CD4-positive, alpha-beta memory T cell (primary cell): ENCODE measurements at regions of chr5 and their contacts with region 1.

Region 1: DNA sequence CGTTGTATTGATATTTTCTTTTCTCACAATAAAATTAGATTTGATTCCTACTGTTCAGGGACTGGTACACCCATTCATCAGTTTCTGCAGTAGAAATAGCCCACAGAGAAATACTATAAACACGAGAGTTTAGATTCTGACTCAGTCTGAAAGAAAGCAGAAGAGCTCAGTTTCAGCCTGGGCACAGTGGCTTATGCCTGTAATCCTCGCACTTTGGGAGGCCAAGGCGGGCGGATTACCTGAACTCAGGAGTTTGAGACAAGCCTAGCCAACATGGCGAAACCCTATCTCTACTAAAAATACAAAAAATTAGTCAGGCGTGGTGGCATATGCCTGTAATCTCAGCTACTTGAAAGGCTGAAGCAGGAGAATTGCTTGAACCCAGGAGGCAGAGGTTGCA is 8.6 kb downstream of the ITK start:
- DNase-seq: no peak
- H3K4me3 ChIP-seq: peak overlapping the region; percentile 44 to 59
- H3K4me3 Mint-ChIP-seq: peak overlapping the region; percentile 84 to 100 (median 96)
- H3K27ac ChIP-seq: peak overlapping the region; percentile 64
- H3K27ac Mint-ChIP-seq: peak overlapping the region; percentile 84 to 97 (median 93)
- H3K4me1 ChIP-seq: peaks cover 97% of the 10 kb centered on the region
- H3K4me1 Mint-ChIP-seq: peaks cover 66 to 91% (median 78%) of the 10 kb centered on the region in 4 donors
- H3K27me3 ChIP-seq: no peaks in the 10 kb centered on the region
- H3K27me3 Mint-ChIP-seq: no peaks in the 10 kb centered on the region

Region 2: GRCh38 chr5:156647034-156647451 is 542.2 kb before region 1 on chr5:
- CTCF ChIA-PET with region 1: no interaction called
- POLR2A ChIA-PET with region 1: no interaction called
- intact Hi-C with region 1: no loop called
- DNase-seq: no peak
- H3K4me3 ChIP-seq: no peak overlapping the region
- H3K4me3 Mint-ChIP-seq: no peak overlapping the region
- H3K27ac ChIP-seq: no peak overlapping the region
- H3K27ac Mint-ChIP-seq: no peak overlapping the region
- H3K4me1 ChIP-seq: no peaks in the 10 kb centered on the region
- H3K4me1 Mint-ChIP-seq: no peaks in the 10 kb centered on the region
- H3K27me3 ChIP-seq: no peaks in the 10 kb centered on the region
- H3K27me3 Mint-ChIP-seq: peaks cover 8% of the 10 kb centered on the region in 2 donors

Region 3: GRCh38 chr5:156934450-156935211 is 254.6 kb before region 1 on chr5:
- CTCF ChIA-PET with region 1: no interaction called
- POLR2A ChIA-PET with region 1: no interaction called
- intact Hi-C with region 1: no loop called
- DNase-seq: peak; percentile 45 to 56 (median 50)
- H3K4me3 ChIP-seq: no peak overlapping the region
- H3K4me3 Mint-ChIP-seq: peak overlapping the region in 7 of 8 donors; percentile 49 to 69 (median 58)
- H3K27ac ChIP-seq: no peak overlapping the region
- H3K27ac Mint-ChIP-seq: peak overlapping the region in 5 of 7 donors; percentile 6 to 72 (median 30)
- H3K4me1 ChIP-seq: peaks cover under 1% of the 10 kb centered on the region
- H3K4me1 Mint-ChIP-seq: peaks cover 6 to 20% (median 12%) of the 10 kb centered on the region in 4 donors
- H3K27me3 ChIP-seq: no peaks in the 10 kb centered on the region
- H3K27me3 Mint-ChIP-seq: no peaks in the 10 kb centered on the region

Region 4: DNA sequence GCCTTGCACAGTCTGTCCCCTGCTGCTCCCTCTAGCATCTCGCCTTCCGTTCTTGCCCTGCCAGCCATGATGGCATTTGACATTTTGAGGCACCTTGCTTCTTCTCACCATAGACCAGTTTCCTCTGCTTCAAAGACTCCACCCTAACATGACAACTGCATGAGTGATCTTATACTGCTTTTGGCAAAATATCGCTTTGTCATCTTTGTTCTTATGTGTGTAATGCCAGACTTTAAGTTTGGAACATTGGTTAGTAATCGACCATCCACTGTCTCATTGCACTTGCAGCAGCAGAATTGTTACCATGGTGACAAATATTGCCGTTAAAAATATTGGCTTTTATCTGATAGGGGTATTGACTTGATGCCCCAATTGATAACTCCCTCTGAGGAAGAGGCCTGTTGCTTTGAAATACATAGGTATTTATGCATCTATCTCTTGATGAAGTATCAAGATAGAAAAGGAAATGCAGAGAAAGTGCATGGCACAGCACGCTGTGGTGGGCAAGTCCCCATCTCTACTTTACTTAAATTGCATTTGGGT is 29.9 kb before region 1 on chr5:
- CTCF ChIA-PET with region 1: interaction called, 12 read pairs
- POLR2A ChIA-PET with region 1: interaction called, 171 read pairs
- intact Hi-C with region 1: no loop called
- DNase-seq: peak; percentile 74 to 87 (median 81)
- H3K4me3 ChIP-seq: peak overlapping the region in 1 of 2 donors; percentile 31
- H3K4me3 Mint-ChIP-seq: peak overlapping the region in 7 of 8 donors; percentile 51 to 75 (median 65)
- H3K27ac ChIP-seq: peak overlapping the region; percentile 88
- H3K27ac Mint-ChIP-seq: peak overlapping the region; percentile 91 to 99 (median 98)
- H3K4me1 ChIP-seq: peaks cover 74% of the 10 kb centered on the region
- H3K4me1 Mint-ChIP-seq: peaks cover 57 to 91% (median 73%) of the 10 kb centered on the region in 4 donors
- H3K27me3 ChIP-seq: no peaks in the 10 kb centered on the region
- H3K27me3 Mint-ChIP-seq: no peaks in the 10 kb centered on the region

Region 5: GRCh38 chr5:157167214-157167621 is 22.0 kb before region 1 on chr5:
- CTCF ChIA-PET with region 1: interaction called, 4 read pairs
- POLR2A ChIA-PET with region 1: interaction called, 171 read pairs
- intact Hi-C with region 1: no loop called
- DNase-seq: no peak
- H3K4me3 ChIP-seq: peak overlapping the region in 1 of 2 donors; percentile 12
- H3K4me3 Mint-ChIP-seq: peak overlapping the region; percentile 4 to 85 (median 67)
- H3K27ac ChIP-seq: peak overlapping the region; percentile 56
- H3K27ac Mint-ChIP-seq: peak overlapping the region; percentile 71 to 95 (median 80)
- H3K4me1 ChIP-seq: peaks cover 42% of the 10 kb centered on the region
- H3K4me1 Mint-ChIP-seq: peaks cover 42 to 85% (median 58%) of the 10 kb centered on the region in 4 donors
- H3K27me3 ChIP-seq: no peaks in the 10 kb centered on the region
- H3K27me3 Mint-ChIP-seq: no peaks in the 10 kb centered on the region

Region 6: DNA sequence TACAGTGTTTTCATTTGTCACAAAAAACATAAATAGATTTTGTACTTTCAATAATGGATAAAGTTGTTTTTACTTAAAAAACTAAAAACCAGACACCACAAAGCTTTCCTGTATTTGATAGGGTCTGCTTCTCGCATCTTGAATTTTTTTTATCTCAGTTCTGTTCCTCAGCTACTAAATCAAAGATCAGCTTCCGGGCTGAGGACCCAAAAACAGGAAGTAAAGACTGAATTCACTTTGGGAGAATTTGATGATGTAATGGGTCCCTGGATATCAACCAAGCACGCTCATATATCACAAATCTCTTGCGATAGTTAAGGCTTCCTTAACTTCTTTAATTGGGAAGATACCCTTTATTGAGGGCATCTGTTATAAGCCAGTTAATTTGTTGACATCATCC is 15.5 kb after region 1 on chr5:
- CTCF ChIA-PET with region 1: interaction called, 15 read pairs
- POLR2A ChIA-PET with region 1: interaction called, 1,020 read pairs
- intact Hi-C with region 1: loop called (anchors 1 kb)
- DNase-seq: peak in 3 of 5 donors; percentile 44 to 74 (median 57)
- H3K4me3 ChIP-seq: no peak overlapping the region
- H3K4me3 Mint-ChIP-seq: peak overlapping the region; percentile 42 to 96 (median 74)
- H3K27ac ChIP-seq: peak overlapping the region; percentile 55
- H3K27ac Mint-ChIP-seq: peak overlapping the region; percentile 81 to 94 (median 87)
- H3K4me1 ChIP-seq: peaks cover 99% of the 10 kb centered on the region
- H3K4me1 Mint-ChIP-seq: peaks cover 60 to 96% (median 81%) of the 10 kb centered on the region in 4 donors
- H3K27me3 ChIP-seq: no peaks in the 10 kb centered on the region
- H3K27me3 Mint-ChIP-seq: no peaks in the 10 kb centered on the region